Activated T-helper 1 cell treated with anti-CD3 and anti-CD28 coated beads, Interleukin-12 subunit alpha, Interleukin-12 subunit beta, Interleukin-2, Interleukin-4 antibody, amounts not matched to agents 30 ng/mL and 10 ng/mL and 1 ng/mL, durations not matched to agents 14 hours and 24 hours and 36 hours (primary cell): ENCODE measurements at regions of chr16 and their contacts with region 1.

Region 1: GRCh38 chr16:70267516-70267915 is 15.8 kb upstream of the EXOSC6 start:
- DNase-seq: no peak
- H3K4me3 Mint-ChIP-seq: no peak overlapping the region
- H3K27ac Mint-ChIP-seq: no peak overlapping the region
- H3K4me1 Mint-ChIP-seq: no peaks in the 10 kb centered on the region
- H3K27me3 Mint-ChIP-seq: no peaks in the 10 kb centered on the region

Region 2: GRCh38 chr16:68658258-68659008 is 1609.1 kb before region 1 on chr16:
- intact Hi-C with region 1: no loop called
- DNase-seq: no peak
- H3K4me3 Mint-ChIP-seq: no peak overlapping the region
- H3K27ac Mint-ChIP-seq: no peak overlapping the region
- H3K4me1 Mint-ChIP-seq: no peaks in the 10 kb centered on the region
- H3K27me3 Mint-ChIP-seq: peaks cover 2% of the 10 kb centered on the region

Region 3: DNA sequence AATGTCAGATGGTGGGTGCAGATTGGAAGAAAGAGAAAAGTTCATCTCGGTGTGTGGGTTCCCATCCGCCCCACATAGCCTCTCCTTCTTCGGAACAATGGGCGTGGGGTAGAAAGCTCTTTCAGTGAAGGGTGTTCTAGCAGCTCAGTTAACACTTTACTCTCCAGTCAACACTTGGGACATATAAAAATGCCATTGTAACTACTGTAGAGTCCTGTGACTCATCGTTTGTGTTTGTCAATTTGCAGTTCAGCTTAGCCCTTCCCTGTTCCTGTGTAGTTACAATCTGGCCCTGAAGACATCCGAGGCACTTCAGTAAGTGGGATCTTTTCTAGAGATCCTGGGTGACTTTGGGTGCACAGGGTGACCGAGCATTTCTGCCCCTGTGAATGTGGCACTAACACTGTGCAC is 105.5 kb before region 1 on chr16:
- intact Hi-C with region 1: loop called (anchors 5 kb)
- DNase-seq: no peak
- H3K4me3 Mint-ChIP-seq: no peak overlapping the region
- H3K27ac Mint-ChIP-seq: no peak overlapping the region
- H3K4me1 Mint-ChIP-seq: no peaks in the 10 kb centered on the region
- H3K27me3 Mint-ChIP-seq: no peaks in the 10 kb centered on the region

Region 4: GRCh38 chr16:70289229-70290098 is 21.9 kb after region 1 on chr16 and contains the start of gene AARS1:
- intact Hi-C with region 1: no loop called
- DNase-seq: peak; percentile 95
- H3K4me3 Mint-ChIP-seq: peak within 1 kb of the TSS; percentile 96
- H3K27ac Mint-ChIP-seq: peak within 1 kb of the TSS; percentile 99
- H3K4me1 Mint-ChIP-seq: peaks cover 23% of the 10 kb centered on the region
- H3K27me3 Mint-ChIP-seq: no peaks in the 10 kb centered on the region
- total RNA-seq, gene AARS1: 109 and 111 TPM in 2 replicates